GM10248 (cell line): ENCODE measurements at regions of chr1 and their contacts with region 1.

Region 1: DNA sequence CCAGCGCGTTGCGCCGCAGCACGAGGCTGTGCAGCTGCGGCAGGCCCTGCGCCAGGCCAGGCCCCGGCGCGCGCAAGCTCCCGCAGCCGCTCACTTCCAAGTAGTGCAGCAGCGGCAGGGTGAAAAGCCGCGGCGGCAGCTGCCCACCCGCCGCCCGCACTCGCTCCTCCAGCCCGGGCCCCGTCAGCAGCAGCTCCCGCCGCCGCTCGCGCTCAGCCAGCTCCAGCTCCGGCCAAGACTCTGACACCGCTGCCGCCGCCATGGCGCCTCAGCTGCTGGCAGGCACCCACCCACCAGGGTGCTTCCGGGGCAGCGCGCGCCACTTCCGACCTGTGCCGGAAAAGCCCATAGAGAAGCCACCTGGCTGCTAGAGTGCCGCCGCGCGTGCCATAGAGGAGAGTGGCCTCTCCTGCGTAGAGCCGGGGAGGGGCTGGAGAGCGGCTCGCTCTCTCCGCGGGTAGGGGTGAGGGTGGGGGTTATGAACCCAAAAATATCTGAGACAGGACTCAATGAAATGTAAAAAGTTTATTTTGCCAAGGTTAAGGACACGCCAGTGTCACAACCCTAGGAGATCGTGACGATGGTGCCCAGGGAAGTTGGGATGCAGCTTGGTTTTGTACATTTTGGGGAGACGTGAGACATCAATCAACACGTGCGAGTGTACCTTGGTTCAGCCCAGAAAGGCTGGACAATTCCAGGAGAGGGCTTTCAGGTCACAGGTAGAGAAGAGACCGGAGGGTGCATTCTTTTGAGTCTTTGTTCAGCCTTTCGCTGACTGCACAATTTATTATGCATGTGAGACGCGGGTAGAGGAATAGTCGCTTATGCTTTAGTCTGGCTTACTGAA is at the start of gene LRRC47:
- DNase-seq: peak; percentile 98
- CTCF ChIP-seq: no peak

Region 2: GRCh38 chr1:3656450-3657095 is 139.9 kb before region 1 on chr1:
- CTCF ChIA-PET with region 1: no interaction called
- POLR2A ChIA-PET with region 1: no interaction called
- DNase-seq: peak; percentile 84
- CTCF ChIP-seq: no peak

Region 3: DNA sequence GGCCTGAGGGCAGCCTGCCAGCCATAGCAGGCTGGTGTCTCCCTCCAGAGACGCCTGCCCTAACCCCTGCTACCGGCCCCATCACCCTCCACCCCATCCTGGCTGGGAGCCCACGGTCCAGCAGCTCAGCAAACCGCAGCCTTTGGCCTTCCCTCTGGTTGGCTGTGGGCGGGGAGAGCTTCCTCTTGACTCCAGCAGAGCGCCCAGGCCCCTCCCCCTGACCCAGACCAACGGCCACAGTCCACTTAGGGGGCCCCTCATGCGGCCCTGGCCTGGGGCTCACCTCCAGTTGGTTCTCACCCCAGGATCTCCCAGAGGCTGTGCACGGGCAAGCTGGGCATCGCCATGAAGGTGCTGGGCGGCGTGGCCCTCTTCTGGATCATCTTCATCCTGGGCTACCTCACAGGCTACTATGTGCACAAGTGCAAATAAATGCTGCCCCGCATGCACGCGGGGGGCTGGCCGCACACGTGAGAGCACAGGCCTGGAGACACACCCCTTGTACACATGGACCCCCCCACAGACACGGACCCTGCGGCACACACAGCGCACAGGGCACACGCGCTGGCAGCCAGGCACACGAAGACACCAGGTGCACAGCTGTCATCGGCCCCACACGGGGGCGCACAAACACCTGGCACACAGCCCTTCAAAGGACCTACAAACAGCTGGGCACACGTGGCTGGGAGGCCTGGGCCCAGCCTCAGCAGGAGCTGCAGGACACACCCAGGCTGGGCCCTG is 20.8 kb before region 1 on chr1:
- CTCF ChIA-PET with region 1: interaction called, 18 read pairs
- POLR2A ChIA-PET with region 1: no interaction called
- DNase-seq: peak; percentile 77
- CTCF ChIP-seq: peak; percentile 69

Region 4: DNA sequence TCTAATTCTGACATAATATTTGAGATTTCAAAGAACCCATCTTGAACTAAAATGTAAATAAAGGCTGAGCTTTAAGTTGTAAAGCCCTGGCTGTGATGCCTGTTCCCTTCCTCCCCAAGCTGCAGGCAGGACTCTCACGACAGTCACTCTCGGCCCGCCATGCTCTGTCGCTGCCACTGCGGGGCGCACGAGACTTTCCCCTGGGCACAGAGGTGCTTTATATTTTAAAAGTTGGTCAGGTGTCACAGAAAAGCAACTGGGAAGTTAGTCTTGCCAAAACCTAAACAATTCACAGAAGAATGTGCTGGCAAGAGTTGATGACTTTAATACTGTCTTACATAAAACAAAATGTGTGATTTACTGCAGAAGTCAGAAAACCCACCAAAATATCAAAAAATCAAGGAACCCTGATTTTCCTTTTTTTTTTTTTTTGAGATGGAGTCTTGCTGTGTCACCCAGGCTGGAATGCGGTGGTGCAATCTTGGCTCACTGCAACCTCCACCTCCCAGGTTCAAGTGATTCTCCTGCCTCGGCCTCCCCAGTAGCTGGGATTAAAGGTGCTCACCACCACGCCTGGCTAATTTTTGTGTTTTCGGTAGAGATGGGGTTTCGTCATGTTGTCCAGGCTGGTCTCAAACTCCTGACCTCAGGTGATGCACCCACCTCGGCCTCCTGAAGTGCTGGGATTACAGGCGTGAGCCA is 10.8 kb before region 1 on chr1:
- CTCF ChIA-PET with region 1: interaction called, 10 read pairs
- POLR2A ChIA-PET with region 1: no interaction called
- DNase-seq: no peak
- CTCF ChIP-seq: peak; percentile 32

Region 5: GRCh38 chr1:3821004-3821403 is 24.6 kb after region 1 on chr1:
- CTCF ChIA-PET with region 1: no interaction called
- POLR2A ChIA-PET with region 1: no interaction called
- DNase-seq: no peak
- CTCF ChIP-seq: no peak

Region 6: GRCh38 chr1:3890389-3891328 is 94.2 kb after region 1 on chr1:
- CTCF ChIA-PET with region 1: no interaction called
- POLR2A ChIA-PET with region 1: no interaction called
- DNase-seq: peak; percentile 50
- CTCF ChIP-seq: no peak